ENCODE measurements at regions of chr22 and their contacts with region 1.

Region 1: GRCh38 chr22:18024276-18024947 is at the start of gene MICAL3:
- DNase-seq: peak; percentile 83
- ATAC-seq: peak; percentile 96
- H3K4me3 Mint-ChIP-seq: peak within 1 kb of the TSS; percentile 94
- H3K27ac Mint-ChIP-seq: peak within 1 kb of the TSS; percentile 91
- H3K4me1 Mint-ChIP-seq: peaks cover 18% of the 10 kb centered on the region
- H3K27me3 Mint-ChIP-seq: no peaks in the 10 kb centered on the region
- CTCF ChIP-seq: no peak
- total RNA-seq, gene MICAL3: 232 and 257 TPM in 2 replicates

Region 2: GRCh38 chr22:17830043-17830961 is 194.1 kb before region 1 on chr22:
- CTCF ChIA-PET with region 1: interaction called, 23 read pairs
- POLR2A ChIA-PET with region 1: no interaction called
- intact Hi-C with region 1: loop called (anchors 1 kb)
- DNase-seq: peak; percentile 75
- ATAC-seq: peak; percentile 98
- H3K4me3 Mint-ChIP-seq: no peak overlapping the region
- H3K27ac Mint-ChIP-seq: peak overlapping the region; percentile 27
- H3K4me1 Mint-ChIP-seq: peaks cover 7% of the 10 kb centered on the region
- H3K27me3 Mint-ChIP-seq: no peaks in the 10 kb centered on the region
- CTCF ChIP-seq: peak; percentile 97

Region 3: DNA sequence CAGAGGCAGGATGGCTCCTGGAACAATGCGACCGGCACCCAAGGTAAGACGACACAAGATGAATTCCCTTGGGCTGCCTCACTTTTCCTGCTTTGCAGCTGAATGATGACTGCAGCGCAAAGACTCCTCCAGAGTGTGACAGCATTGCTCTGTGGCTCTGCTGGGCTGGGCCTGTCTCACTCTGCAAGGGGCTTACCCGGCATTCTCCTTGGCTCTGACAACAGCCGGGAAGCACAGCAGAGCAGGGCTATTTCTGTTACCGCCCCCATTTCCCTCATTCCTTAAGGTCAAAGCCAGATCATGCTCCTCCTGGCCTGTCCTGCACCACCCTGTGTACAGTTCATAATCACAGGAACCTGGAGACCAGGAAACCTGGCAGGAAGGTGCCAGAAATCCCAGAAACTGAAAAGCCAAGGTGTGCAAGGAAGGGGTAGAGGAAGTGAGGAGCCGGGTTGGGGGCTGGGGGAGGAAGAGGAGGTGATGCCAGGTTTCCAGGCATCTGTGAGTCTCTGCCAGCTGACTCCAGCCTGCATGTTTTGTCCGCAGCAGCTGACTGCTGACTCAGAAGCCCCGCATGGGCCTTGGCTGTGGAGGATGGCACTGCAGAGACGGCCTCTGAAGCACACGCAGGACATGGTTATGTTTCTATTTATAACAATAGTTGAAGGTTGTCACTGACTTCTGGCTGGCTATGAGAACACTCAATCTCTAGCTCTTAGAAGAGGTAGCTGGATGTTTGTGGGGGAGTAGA is 113.7 kb before region 1 on chr22:
- CTCF ChIA-PET with region 1: interaction called, 11 read pairs
- POLR2A ChIA-PET with region 1: no interaction called
- intact Hi-C with region 1: no loop called
- DNase-seq: no peak
- ATAC-seq: no peak
- H3K4me3 Mint-ChIP-seq: no peak overlapping the region
- H3K27ac Mint-ChIP-seq: no peak overlapping the region
- H3K4me1 Mint-ChIP-seq: peaks cover 66% of the 10 kb centered on the region
- H3K27me3 Mint-ChIP-seq: no peaks in the 10 kb centered on the region
- CTCF ChIP-seq: no peak

Region 4: DNA sequence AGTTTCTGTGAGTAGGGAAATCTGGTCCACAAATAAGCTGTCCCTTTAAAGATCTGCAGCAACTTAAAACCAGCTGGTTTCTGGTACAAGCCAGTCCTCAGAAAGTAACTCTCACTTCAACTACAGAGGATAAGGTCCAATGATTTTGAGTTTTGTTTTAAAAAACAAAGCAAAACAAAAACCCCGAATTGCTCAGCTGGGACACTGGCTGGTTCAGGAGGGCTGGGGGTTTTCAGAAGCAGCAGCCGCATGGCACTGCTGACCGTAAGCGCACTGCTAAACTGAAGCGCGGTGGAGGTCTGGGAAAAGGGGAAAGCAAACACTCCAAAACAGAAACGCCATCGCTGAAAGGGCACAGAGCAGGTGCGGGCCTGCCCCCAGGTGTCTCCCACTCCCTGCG is 59.8 kb before region 1 on chr22:
- CTCF ChIA-PET with region 1: interaction called, 5 read pairs
- POLR2A ChIA-PET with region 1: interaction called, 3 read pairs
- intact Hi-C with region 1: loop called (anchors 1 kb)
- DNase-seq: peak; percentile 37
- ATAC-seq: peak; percentile 89
- H3K4me3 Mint-ChIP-seq: peak overlapping the region; percentile 56
- H3K27ac Mint-ChIP-seq: peak overlapping the region; percentile 88
- H3K4me1 Mint-ChIP-seq: peaks cover 84% of the 10 kb centered on the region
- H3K27me3 Mint-ChIP-seq: no peaks in the 10 kb centered on the region
- CTCF ChIP-seq: no peak

Region 5: DNA sequence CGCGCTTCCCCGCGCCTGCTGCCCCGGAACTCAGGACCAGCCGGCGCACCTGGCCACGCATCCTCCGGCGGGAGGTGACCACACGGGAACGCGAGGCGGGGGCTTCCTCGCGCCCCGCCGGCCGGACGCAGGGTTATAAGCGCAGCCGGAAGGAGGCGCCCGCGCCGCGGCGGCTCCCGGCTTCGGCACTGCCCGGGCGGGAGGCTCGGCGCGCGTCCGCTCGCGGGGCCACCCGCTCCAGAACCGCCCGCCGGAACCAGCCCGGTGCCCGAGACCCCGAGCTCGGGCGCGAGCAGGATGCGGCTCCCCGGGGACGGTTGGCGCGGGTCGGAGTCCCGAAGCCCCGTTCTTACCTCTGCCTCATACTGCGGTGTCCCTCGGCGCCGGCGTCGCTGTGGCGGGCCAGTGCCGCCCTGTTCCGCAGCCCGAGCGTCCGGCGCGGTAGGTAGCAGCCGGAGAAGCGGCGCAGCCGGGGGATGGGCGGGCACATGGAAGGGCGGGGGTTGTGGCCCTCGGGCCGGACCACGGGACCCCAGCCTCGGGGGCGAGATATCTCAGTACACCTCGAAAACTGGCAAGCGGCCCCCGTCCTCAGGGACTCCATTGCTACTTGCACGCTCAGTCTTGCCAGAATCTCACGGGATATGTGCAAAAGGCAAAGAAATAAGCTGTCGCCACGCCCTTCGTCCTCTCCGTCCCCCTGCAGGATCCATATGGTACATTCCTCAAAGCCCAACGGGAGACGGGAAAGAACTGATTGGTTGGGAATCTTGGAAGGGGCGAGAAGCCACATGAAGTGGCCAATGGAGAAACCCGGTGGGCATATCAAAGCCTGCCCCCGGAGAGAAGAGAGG is 23.1 kb before region 1 on chr22:
- CTCF ChIA-PET with region 1: interaction called, 11 read pairs
- POLR2A ChIA-PET with region 1: interaction called, 25 read pairs
- intact Hi-C with region 1: loop called (anchors 1 kb)
- DNase-seq: peak; percentile 88
- ATAC-seq: peak; percentile 66
- H3K4me3 Mint-ChIP-seq: peak overlapping the region; percentile 92
- H3K27ac Mint-ChIP-seq: peak overlapping the region; percentile 99
- H3K4me1 Mint-ChIP-seq: peaks cover 85% of the 10 kb centered on the region
- H3K27me3 Mint-ChIP-seq: no peaks in the 10 kb centered on the region
- CTCF ChIP-seq: no peak

Region 6: DNA sequence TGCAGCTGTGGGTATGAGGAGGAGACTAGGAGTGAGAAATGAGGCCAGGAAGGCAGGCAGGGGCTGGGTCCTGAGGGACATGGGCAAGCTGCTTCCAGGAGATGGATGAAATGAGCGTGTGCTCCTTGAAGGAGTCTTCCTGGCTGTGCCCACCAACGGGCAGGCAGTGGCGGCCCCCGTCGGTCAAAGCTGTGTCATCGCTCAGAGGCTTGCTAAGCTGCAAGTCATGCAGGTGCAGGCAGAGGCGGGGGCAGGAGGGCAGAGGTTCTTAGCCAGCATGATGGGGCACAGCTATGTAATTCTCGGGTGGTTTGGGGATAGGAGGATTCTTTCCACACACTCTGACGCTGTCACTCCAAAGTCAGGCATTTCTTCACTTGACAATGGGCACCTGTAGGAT is 40.8 kb after region 1 on chr22:
- CTCF ChIA-PET with region 1: interaction called, 6 read pairs
- POLR2A ChIA-PET with region 1: no interaction called
- intact Hi-C with region 1: loop called (anchors 2 kb)
- DNase-seq: no peak
- ATAC-seq: peak; percentile 30
- H3K4me3 Mint-ChIP-seq: peak overlapping the region; percentile 6
- H3K27ac Mint-ChIP-seq: no peak overlapping the region
- H3K4me1 Mint-ChIP-seq: peaks cover 64% of the 10 kb centered on the region
- H3K27me3 Mint-ChIP-seq: no peaks in the 10 kb centered on the region
- CTCF ChIP-seq: no peak